K562 (cell line): ENCODE measurements at regions of chr12 and their contacts with region 1.

Region 1: DNA sequence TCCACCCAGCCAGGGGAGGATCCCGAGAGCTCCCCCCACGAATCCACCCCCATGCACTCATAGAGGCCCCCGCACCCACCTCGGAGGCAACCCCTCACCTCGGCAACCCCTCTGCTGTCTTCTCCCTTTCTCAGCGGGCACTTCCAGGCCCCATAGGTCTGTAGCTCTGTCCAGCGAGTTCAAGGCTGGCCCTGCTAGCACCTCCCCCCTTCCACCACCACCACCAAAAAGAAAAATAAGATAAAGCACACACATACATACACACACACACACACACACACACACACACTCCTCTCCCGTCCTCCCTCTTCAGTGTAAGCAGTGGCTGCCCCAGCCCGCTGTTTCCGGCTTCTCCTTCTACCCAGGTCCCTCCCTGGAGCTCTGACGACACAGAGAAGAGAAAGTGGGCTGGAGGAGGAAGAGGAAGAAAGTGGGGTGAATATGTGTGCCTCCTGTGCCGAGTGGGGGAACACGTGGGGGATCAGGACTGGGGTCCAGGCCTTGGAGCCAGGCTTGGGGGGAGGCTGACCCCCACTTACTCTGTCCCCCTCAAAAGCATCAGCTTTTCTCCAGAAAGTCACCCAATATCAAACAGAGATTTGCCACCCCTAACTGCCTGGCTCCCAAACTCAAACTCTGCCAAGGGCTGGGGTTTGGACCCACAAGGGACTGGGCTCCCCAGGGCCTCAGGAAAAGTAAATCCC is at the start of gene STAT6:
- DNase-seq: peak; percentile 66 to 86 (median 70)
- ATAC-seq: peak; percentile 81
- H3K4me3 ChIP-seq: peak within 1 kb of the TSS; percentile 48
- H3K27ac ChIP-seq: peak within 1 kb of the TSS; percentile 91
- H3K4me1 ChIP-seq: peaks cover 23 to 30% of the 10 kb centered on the region in 2 experiments; a peak in 4 of 5 replicates
- H3K27me3 ChIP-seq: no peaks in the 10 kb centered on the region
- CTCF ChIP-seq: no peak
- EP300 ChIP-seq: 0 out of 2 replicates have a peak, but pooled peaks have one; percentile 10
- POLR2A ChIP-seq: peak; percentile 85
- RAD21 ChIP-seq: no peak; a peak in 1 of 4 replicates
- polyA plus RNA-seq, gene STAT6: 2.4 to 4.3 TPM

Region 2: DNA sequence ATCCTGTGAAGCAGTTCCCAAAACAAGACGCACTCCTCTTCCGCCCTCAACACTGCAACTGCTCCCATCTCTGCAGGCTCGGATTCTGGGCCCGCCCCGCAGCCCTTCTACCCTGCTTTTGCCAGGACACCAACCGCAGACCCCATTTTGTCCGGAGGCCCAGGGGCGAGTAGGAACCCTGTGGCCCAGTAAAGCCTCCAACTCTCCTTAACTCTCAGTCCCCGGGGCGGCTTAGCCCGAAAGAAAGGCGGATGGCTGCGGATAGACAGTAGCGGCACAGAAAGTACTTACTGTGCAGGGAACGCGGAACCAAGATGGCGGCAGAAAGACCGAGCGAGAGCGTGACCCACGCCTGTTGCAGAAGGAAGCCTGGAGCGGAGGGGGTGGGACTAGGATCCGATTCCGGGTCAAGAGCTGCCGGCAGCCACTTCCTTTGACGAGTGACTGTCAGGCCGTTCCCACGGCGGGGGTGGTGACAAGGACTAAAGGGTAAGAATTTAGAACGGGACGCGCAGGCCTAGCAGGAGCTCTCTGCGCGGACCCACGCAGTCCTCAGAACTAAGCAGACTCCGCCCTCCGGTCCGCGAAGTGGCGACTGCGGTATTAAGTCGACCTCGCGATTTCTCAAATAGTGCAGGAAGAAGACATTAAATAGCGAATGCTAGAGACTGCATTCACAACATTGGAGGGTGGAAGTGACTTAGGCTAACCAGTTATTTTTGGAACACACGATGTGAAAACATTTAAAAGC is 386.0 kb before region 1 on chr12 and contains the start of gene NACA:
- CTCF ChIA-PET with region 1: no interaction called
- POLR2A ChIA-PET with region 1: interaction called, 10 read pairs
- in situ Hi-C with region 1: no loop called
- intact Hi-C with region 1: no loop called
- DNase-seq: peak; percentile 95 to 99 (median 96)
- ATAC-seq: peak; percentile 93
- H3K4me3 ChIP-seq: peak within 1 kb of the TSS; percentile 89
- H3K27ac ChIP-seq: peak within 1 kb of the TSS; percentile 97
- H3K4me1 ChIP-seq: peaks cover 14 to 29% of the 10 kb centered on the region in 2 experiments
- H3K27me3 ChIP-seq: no peaks in the 10 kb centered on the region
- CTCF ChIP-seq: no peak
- EP300 ChIP-seq: peak; percentile 3; the same call in 1 of the 2 replicates
- POLR2A ChIP-seq: peak; percentile 99
- RAD21 ChIP-seq: peak in 1 of 2 experiments; percentile 21; a peak in 2 of 4 replicates
- polyA plus RNA-seq, gene NACA: 2,280 to 2,416 TPM

Region 3: DNA sequence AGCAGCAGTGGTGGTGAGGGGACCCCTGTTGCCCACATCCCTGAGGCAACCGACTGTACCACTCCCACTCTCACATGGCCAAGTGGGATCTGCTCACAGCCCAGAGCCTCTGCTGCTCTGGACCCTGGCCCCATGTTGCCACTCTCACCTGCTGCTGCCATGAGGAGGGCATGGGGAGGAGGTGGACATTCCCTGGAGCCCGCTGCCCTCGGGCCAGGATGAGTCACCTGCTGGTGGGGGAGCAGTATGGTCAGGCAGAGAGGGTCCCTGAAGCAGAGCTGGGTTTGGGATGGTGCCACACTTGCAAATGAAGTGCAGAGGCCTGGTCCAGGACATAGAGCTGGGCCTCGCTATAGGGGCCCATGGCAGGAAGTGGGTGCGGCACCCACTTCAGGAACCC is 203.0 kb before region 1 on chr12:
- CTCF ChIA-PET with region 1: no interaction called
- POLR2A ChIA-PET with region 1: no interaction called
- in situ Hi-C with region 1: no loop called
- intact Hi-C with region 1: no loop called
- DNase-seq: no peak
- ATAC-seq: no peak
- H3K4me3 ChIP-seq: no peak overlapping the region
- H3K27ac ChIP-seq: no peak overlapping the region
- H3K4me1 ChIP-seq: no peaks in the 10 kb centered on the region
- H3K27me3 ChIP-seq: no peaks in the 10 kb centered on the region
- CTCF ChIP-seq: no peak
- EP300 ChIP-seq: no peak
- POLR2A ChIP-seq: no peak
- RAD21 ChIP-seq: no peak

Region 4: GRCh38 chr12:57031138-57031725 is 80.0 kb before region 1 on chr12:
- CTCF ChIA-PET with region 1: no interaction called
- POLR2A ChIA-PET with region 1: interaction called, 3 read pairs
- in situ Hi-C with region 1: no loop called
- intact Hi-C with region 1: loop called (anchors 1 kb)
- DNase-seq: peak in 1 of 4 experiments; percentile 48
- ATAC-seq: peak; percentile 13; the same call in 2 of the 3 replicates
- H3K4me3 ChIP-seq: no peak overlapping the region
- H3K27ac ChIP-seq: no peak overlapping the region
- H3K4me1 ChIP-seq: peaks cover 15 to 23% of the 10 kb centered on the region in 2 experiments
- H3K27me3 ChIP-seq: no peaks in the 10 kb centered on the region
- CTCF ChIP-seq: peak; percentile 27 to 39 (median 35); a peak in 3 of 6 replicates
- EP300 ChIP-seq: no peak
- POLR2A ChIP-seq: no peak
- RAD21 ChIP-seq: peak in 1 of 2 experiments; percentile 51; a peak in 2 of 4 replicates

Region 5: GRCh38 chr12:57078519-57079404 is 32.4 kb before region 1 on chr12 and contains the start of gene NEMP1:
- CTCF ChIA-PET with region 1: interaction called, 3 read pairs
- POLR2A ChIA-PET with region 1: interaction called, 30 read pairs
- in situ Hi-C with region 1: no loop called
- intact Hi-C with region 1: no loop called
- DNase-seq: peak; percentile 96 to 99 (median 96)
- ATAC-seq: peak; percentile 98
- H3K4me3 ChIP-seq: peak within 1 kb of the TSS; percentile 95
- H3K27ac ChIP-seq: peak within 1 kb of the TSS; percentile 98
- H3K4me1 ChIP-seq: peaks cover 11 to 13% of the 10 kb centered on the region in 2 experiments; a peak in 4 of 5 replicates
- H3K27me3 ChIP-seq: no peaks in the 10 kb centered on the region
- CTCF ChIP-seq: no peak
- EP300 ChIP-seq: no peak
- POLR2A ChIP-seq: peak; percentile 94
- RAD21 ChIP-seq: no peak
- polyA plus RNA-seq, gene NEMP1: 9.5 to 15.6 TPM

Region 6: DNA sequence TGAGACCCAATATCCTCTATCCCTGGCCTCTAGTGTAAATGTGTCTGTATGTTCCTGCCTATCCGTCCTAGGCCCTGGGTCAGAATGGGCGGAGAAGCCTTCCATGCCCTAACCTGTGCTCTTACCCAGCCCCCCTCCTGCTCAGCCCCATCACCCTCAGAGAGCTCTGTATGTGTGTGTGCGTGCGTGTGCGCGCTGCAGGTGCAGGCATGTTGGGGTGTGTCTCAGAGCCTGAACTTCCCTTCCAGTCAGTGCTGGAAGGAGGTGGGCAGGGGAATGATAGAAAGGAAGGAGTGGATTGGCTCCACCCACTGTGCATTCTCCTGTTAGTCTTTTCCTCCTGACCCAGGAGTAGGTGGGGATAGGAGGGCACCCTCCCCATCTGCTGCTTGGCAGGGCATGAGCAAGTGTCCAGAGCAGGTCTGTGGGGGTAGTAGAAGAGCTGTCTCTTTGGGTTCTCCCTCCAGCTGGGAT is 15.0 kb before region 1 on chr12:
- CTCF ChIA-PET with region 1: no interaction called
- POLR2A ChIA-PET with region 1: interaction called, 32 read pairs
- in situ Hi-C with region 1: no loop called
- intact Hi-C with region 1: no loop called
- DNase-seq: peak; percentile 13 to 25 (median 20)
- ATAC-seq: no peak
- H3K4me3 ChIP-seq: no peak overlapping the region
- H3K27ac ChIP-seq: peak overlapping the region; percentile 34; the same call in 1 of the 3 replicates
- H3K4me1 ChIP-seq: peaks cover 37 to 60% of the 10 kb centered on the region in 2 experiments
- H3K27me3 ChIP-seq: no peaks in the 10 kb centered on the region; a peak in 1 of 5 replicates
- CTCF ChIP-seq: no peak
- EP300 ChIP-seq: no peak
- POLR2A ChIP-seq: peak; percentile 55; the same call in 1 of the 2 replicates
- RAD21 ChIP-seq: no peak